Esophagus muscularis mucosa (tissue), 4 donors: ENCODE measurements at regions of chr2 and their contacts with region 1.

Region 1: DNA sequence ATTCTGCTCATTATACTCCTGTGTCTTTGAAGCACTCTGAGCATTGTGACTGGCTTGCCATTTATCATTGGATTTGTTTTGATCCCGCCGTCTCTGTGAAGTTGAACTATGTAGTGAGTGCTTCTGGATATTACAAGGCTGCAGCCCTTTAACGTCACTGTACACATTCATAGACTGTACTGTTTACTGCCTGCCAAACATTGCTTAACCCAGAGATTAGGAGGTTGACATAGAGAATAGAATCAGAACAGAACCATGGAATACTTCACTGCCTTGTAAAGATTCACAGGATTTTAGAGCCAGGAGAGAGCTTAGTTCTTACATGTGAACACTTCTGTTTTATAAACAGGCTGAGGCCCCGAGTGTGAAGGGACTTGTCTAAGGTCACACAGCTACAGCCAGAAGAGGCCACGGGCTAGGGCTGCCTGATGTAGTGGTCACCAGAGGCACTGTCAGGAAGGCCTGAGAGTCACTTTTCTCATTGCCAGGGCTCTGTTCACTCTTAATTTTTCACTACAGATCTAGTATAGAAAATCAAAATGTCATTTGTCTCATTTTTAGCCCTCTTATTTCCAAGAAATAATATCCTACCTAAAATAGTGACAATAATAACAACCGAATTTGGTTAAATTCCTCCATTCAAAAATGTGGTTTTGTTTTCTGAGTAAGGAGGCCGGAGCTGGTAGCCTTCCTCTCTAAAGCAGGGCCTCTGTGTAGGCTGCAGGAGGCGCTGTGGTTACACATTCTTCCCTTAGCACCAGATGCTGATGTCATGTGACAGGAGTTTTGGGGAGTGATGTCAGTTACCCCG is 87.9 kb downstream of the UGGT1 start:
- DNase-seq: no peak
- H3K4me3 ChIP-seq: no peak overlapping the region
- H3K27ac ChIP-seq: peak overlapping the region in 3 of 4 donors; percentile 54 to 74 (median 63)
- H3K4me1 ChIP-seq: peaks cover 5 to 12% (median 9%) of the 10 kb centered on the region in 4 donors
- H3K27me3 ChIP-seq: no peaks in the 10 kb centered on the region
- CTCF ChIP-seq: peak; percentile 79 to 90 (median 83)
- EP300 ChIP-seq: no peak
- POLR2A ChIP-seq: no peak

Region 2: GRCh38 chr2:128134573-128134972 is 44.3 kb before region 1 on chr2:
- intact Hi-C with region 1: no loop called
- DNase-seq: no peak
- H3K4me3 ChIP-seq: no peak overlapping the region
- H3K27ac ChIP-seq: no peak overlapping the region
- H3K4me1 ChIP-seq: no peaks in the 10 kb centered on the region
- H3K27me3 ChIP-seq: no peaks in the 10 kb centered on the region
- CTCF ChIP-seq: no peak
- EP300 ChIP-seq: no peak
- POLR2A ChIP-seq: no peak

Region 3: DNA sequence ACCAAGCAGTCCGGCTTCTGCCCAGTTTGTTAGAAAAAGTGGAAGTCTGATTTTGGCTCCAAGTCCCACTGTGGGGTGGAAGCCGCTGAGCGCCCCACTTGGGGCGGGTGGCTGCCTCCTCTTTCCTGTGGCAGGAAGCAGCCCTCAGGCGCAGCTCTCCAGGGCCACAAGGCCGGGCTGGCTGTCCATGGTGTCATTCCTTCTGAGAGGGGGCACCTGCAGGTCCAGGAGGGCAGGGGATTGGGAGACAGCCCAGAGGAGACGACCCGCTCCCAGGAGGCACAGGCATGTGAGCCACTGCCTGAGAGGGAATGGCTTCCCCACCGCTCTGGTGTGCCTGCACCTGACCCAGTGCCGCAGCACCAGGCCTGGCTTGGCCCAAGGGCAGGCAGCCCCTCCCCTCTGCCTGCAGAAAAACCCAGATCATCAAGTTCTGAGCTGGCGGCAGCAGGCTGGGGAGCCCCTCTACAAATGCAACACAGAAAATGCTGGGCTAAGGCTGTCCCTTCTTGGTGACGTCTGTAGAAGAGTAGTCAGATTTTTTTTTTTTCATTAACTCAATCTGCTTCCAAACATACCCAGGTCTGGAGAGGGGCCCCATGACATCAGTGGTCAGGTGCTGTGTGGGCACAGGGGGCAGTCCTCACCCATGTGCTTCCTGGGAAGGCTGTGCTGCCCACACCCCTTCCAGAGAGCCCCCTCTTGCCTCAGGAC is 101.5 kb after region 1 on chr2:
- intact Hi-C with region 1: no loop called
- DNase-seq: no peak
- H3K4me3 ChIP-seq: no peak overlapping the region
- H3K27ac ChIP-seq: peak overlapping the region in 1 of 4 donors; percentile 24
- H3K4me1 ChIP-seq: peaks cover 35 to 54% (median 39%) of the 10 kb centered on the region in 4 donors
- H3K27me3 ChIP-seq: no peaks in the 10 kb centered on the region
- CTCF ChIP-seq: no peak
- EP300 ChIP-seq: no peak
- POLR2A ChIP-seq: no peak

Region 4: DNA sequence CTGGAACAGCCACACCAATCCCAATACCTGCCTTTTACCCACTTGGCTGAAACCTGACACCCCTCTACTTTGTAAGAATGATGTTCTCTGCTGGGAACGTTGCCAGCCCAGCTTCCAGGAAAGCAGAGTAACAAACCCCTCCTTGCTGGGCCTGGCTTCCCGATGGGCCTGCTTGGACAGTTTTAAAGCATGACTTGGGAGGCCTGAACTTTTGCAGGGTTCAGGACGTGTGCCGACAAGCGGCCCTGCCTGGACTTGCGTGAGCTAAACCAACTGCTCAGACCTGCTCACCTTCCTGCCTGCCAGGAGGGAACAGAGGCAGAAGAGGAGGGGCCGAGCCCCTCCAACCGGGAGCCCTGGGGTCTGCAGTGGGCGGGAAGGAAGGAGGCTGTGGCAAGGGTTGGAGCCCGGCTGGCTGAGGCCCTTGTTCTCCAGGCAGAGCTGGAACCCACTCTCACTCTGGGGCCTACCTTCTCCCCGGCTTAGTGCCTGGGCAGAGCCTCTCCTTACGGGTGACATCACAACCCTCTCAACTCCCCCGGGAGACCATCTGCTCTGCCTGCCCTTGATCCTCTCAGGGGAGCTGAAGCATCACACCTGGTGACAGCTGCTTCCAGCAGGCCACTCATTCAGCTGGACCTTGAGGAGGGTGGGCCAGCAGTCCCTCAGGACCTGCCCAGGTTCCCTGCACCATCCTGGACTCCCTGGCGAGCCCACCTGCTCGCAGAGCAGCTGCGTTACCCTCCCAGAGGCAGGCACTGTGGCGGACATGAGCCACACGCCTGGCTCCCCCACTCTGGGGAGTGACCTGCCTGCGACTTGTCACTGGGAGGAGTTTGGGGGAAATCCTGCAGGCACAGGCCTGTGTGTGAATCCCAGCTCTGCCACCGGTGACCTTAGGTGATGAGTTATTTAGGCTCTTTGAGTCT is 126.6 kb after region 1 on chr2:
- intact Hi-C with region 1: loop called (anchors 5 kb)
- DNase-seq: no peak
- H3K4me3 ChIP-seq: peak overlapping the region in 3 of 4 donors; percentile 0 to 26 (median 7)
- H3K27ac ChIP-seq: peak overlapping the region; percentile 60 to 77 (median 72)
- H3K4me1 ChIP-seq: peaks cover 72 to 98% (median 91%) of the 10 kb centered on the region in 4 donors
- H3K27me3 ChIP-seq: no peaks in the 10 kb centered on the region
- CTCF ChIP-seq: no peak
- EP300 ChIP-seq: no peak
- POLR2A ChIP-seq: no peak

Region 5: DNA sequence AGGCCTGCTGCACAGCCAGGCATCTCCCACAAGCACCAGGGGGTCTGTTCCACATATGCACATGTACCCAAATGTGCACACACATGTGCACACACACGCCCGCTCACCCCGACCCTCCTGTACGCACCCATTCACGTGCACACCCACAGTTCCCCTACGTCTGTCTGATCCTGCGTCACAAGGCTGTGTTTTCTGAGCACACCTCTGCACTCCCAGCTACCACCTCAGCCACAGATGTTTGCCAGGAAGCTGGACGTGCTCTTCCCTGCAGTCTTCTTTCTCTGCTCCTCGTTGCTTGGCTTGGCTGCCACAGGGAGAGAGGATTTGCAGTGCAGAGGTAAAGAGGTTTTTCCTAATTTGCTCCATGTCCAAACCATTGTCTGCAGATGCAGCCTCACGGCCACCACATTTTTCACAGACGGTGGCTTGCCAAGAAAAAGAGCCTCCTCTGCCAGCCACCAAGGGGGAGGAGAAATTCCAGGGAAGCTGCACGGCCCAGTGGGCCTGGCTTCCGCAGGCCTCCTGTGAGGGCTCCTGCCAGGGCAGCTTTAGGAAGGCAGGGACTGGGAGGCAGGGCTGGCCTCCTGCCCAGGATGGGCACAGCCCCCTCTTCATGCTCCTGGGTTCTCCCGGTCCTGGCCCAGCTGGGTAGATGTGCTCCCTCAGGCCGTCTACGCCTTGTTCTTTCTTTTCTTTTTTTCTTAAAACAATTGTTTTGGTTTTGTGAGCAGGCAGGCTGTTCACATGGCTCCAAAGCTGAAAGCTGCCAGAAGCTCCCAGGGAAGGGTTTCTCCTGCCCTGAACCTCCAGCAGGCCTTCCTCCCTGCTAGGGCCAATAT is 169.1 kb after region 1 on chr2:
- intact Hi-C with region 1: no loop called
- DNase-seq: peak; percentile 92
- H3K4me3 ChIP-seq: no peak overlapping the region
- H3K27ac ChIP-seq: peak overlapping the region; percentile 68 to 82 (median 76)
- H3K4me1 ChIP-seq: peaks cover 21 to 38% (median 37%) of the 10 kb centered on the region in 4 donors
- H3K27me3 ChIP-seq: no peaks in the 10 kb centered on the region
- CTCF ChIP-seq: no peak
- EP300 ChIP-seq: peak; percentile 57
- POLR2A ChIP-seq: no peak

Region 6: GRCh38 chr2:128408349-128409305 is 229.8 kb after region 1 on chr2:
- intact Hi-C with region 1: no loop called
- DNase-seq: peak; percentile 91
- H3K4me3 ChIP-seq: no peak overlapping the region
- H3K27ac ChIP-seq: peak overlapping the region in 1 of 4 donors; percentile 33
- H3K4me1 ChIP-seq: peaks cover 0 to 4% (median 0%) of the 10 kb centered on the region in 4 donors
- H3K27me3 ChIP-seq: peaks cover 0 to 4% (median 0%) of the 10 kb centered on the region in 4 donors
- CTCF ChIP-seq: no peak
- EP300 ChIP-seq: no peak
- POLR2A ChIP-seq: no peak